Spleen (tissue), 13 donors: ENCODE measurements at regions of chr3 and their contacts with region 1.

Region 1: DNA sequence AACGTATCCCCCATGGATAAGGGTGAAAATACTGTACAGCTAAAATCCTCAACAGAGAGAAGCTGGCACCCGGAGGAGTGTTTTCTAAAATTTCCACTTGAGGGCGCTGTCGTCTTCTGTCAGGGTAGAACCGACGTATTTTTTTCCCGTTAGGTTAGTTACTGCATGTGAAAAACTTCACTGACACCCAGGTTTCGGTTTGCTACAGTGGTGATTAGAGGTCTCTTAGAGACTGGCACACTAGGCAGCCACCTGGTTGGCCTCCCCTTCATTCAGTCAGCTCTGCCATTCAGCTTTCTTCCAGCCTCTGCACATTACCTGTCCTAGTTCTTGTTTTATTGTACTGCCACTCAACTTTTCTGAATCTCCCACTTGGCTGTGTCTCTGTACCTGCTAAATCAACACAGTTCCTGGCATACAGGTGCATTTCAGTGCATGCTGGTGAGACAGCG is 18.4 kb downstream of the CCK start:
- DNase-seq: no peak
- H3K4me3 ChIP-seq: no peak overlapping the region
- H3K27ac ChIP-seq: no peak overlapping the region
- H3K4me1 ChIP-seq: peaks cover 0 to 9% (median 0%) of the 10 kb centered on the region in 6 donors
- H3K27me3 ChIP-seq: peaks cover 0 to 23% (median 0%) of the 10 kb centered on the region in 7 donors
- CTCF ChIP-seq: peak; percentile 22 to 79 (median 63)
- POLR2A ChIP-seq: no peak

Region 2: GRCh38 chr3:41893977-41894376 is 353.6 kb before region 1 on chr3:
- intact Hi-C with region 1: no loop called
- DNase-seq: no peak
- H3K4me3 ChIP-seq: no peak overlapping the region
- H3K27ac ChIP-seq: no peak overlapping the region
- H3K4me1 ChIP-seq: no peaks in the 10 kb centered on the region
- H3K27me3 ChIP-seq: no peaks in the 10 kb centered on the region
- CTCF ChIP-seq: peak in 8 of 11 experiments; percentile 28 to 62 (median 46)
- POLR2A ChIP-seq: no peak

Region 3: GRCh38 chr3:42421818-42422796 is 174.5 kb after region 1 on chr3:
- intact Hi-C with region 1: no loop called
- DNase-seq: no peak
- H3K4me3 ChIP-seq: no peak overlapping the region
- H3K27ac ChIP-seq: no peak overlapping the region
- H3K4me1 ChIP-seq: no peaks in the 10 kb centered on the region
- H3K27me3 ChIP-seq: peaks cover 0 to 5% (median 0%) of the 10 kb centered on the region in 7 donors
- CTCF ChIP-seq: no peak
- POLR2A ChIP-seq: no peak

Region 4: GRCh38 chr3:42443819-42444436 is 196.3 kb after region 1 on chr3:
- intact Hi-C with region 1: loop called (anchors 5 kb)
- DNase-seq: peak; percentile 92
- H3K4me3 ChIP-seq: no peak overlapping the region
- H3K27ac ChIP-seq: no peak overlapping the region
- H3K4me1 ChIP-seq: no peaks in the 10 kb centered on the region
- H3K27me3 ChIP-seq: peaks cover 0 to 15% (median 0%) of the 10 kb centered on the region in 7 donors
- CTCF ChIP-seq: peak; percentile 77 to 99 (median 95)
- POLR2A ChIP-seq: no peak

Region 5: DNA sequence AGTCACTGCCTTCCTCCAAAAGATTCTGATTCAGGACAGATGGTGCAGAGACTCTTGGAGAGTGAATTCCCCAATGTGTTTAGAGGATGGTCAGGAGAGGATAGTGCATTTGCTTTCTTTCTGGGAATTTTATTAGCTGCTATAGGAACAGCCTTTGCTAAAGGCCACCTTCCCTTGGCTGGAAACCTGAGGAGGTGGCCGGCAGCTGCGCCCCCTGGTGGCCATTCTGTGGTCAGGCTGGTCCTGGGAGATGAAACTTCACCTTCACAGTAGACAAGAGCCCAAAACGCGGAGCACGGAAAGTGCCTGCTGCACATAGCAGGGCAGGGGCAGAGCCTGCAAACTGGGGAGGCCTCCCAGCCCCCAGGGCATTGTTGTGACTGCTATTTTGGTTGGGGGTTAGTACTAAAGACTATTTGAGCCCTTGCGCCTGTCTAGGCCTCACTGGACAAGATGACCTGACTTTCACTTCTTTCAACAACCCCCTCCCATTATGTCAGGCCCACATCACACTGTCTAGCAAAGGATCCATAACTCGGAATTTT is 299.9 kb after region 1 on chr3:
- intact Hi-C with region 1: loop called (anchors 2 kb)
- DNase-seq: peak; percentile 94
- H3K4me3 ChIP-seq: no peak overlapping the region
- H3K27ac ChIP-seq: no peak overlapping the region
- H3K4me1 ChIP-seq: peaks cover 0 to 22% (median 5%) of the 10 kb centered on the region in 6 donors
- H3K27me3 ChIP-seq: no peaks in the 10 kb centered on the region
- CTCF ChIP-seq: peak; percentile 65 to 96 (median 91)
- POLR2A ChIP-seq: no peak